ENCODE measurements at regions of chr19 and their contacts with region 1.

Region 1: DNA sequence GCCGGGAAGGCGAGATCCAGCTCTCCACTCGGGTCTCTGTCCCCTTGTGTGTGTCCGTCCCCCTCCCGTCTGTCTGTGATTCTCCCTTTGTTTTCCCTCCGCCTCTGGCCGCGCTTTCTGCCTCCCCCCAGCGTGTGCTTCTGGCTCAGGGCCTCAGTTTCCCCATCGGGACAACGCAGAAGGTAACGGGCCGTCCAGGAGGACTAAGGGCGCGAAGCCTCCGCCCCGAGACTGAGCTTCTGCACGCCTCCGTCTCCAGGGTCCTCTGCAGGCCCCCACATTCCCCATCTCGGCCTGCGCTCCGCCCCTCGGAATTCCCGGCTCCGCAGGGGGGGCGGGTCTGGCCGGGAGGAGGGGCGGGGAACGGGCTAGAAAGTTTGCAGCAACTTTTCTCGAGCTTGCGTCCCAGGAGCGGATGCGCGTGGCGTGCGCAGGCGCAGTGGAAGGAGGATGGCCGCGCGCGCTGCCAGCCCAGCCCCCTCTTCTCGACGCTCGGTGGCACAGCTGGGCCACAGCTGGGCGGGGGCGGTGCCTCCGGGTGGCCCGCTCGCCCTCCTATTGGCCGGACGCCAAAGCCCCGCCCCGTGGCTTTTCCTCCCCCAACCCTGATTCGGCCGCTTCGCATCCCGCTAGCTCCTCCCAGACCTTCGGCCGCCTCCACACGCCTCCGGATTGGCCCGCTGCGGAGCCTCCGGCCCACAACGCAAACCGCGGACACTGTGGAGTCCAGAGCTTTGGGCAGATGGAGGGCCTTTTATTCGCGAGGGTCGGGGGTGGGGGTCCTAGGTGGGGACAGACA is at the start of gene SIX5:
- DNase-seq: peak; percentile 98
- H3K4me3 ChIP-seq: peak within 1 kb of the TSS; percentile 30 to 93 (median 59)
- H3K27ac ChIP-seq: peak within 1 kb of the TSS; percentile 91 to 96 (median 95)
- H3K4me1 ChIP-seq: peaks cover 26 to 36% of the 10 kb centered on the region in 2 donors
- H3K27me3 ChIP-seq: no peaks in the 10 kb centered on the region
- CTCF ChIP-seq: no peak
- POLR2A ChIP-seq: peak; percentile 92 to 94
- total RNA-seq, gene SIX5: 18.3 to 33.0 (median 23.3) TPM

Region 2: DNA sequence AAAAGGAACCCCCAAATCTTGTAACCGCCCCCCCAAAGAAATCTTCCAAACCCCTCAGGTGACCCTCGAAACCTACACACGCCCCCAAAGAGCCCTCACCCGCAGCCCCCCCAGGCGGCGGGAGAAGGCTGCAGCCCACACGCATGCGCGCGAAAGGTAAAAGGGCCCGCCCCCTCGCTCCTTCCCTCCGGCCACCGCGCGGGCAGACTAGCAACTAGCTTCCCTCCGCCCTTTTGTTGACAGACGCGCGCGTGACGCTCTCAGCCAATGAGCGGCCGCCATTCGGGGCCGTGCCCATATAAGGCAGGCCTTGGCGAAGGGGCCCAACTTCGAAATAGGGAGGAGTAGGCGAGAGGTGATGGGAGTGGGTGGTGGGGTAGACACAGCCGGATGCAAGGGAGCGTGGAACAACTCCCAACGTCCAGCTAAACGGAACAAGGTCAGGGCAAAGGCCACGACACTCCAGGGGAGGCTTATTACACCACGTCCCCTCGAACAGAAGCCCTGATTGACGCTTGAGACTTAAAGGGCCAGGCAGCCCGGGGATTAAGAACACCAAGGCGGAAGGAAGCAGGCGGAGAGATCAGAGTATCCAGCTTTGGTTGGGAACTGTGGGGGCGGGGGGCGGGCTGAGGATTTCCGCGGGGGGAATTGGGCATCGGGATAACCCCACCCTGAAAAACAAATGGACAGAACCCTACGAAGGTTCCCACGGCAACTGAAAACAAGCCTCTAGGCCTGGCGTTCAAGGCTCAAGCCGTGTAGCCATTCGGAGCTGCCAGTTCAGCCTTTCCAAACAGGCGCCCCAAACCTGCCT is 51.8 kb before region 1 on chr19:
- intact Hi-C with region 1: loop called (anchors 10 kb)
- DNase-seq: peak; percentile 99
- H3K4me3 ChIP-seq: peak overlapping the region in 2 of 3 donors; percentile 50 to 84
- H3K27ac ChIP-seq: peak overlapping the region; percentile 91 to 98 (median 95)
- H3K4me1 ChIP-seq: peaks cover 17 to 21% of the 10 kb centered on the region in 2 donors
- H3K27me3 ChIP-seq: no peaks in the 10 kb centered on the region
- CTCF ChIP-seq: peak in 2 of 6 experiments; percentile 4 to 21
- POLR2A ChIP-seq: peak in 1 of 2 donors; percentile 89

Region 3: GRCh38 chr19:45913874-45914830 is 145.0 kb after region 1 on chr19 and contains the start of gene NANOS2:
- intact Hi-C with region 1: no loop called
- DNase-seq: no peak
- H3K4me3 ChIP-seq: no peak within 1 kb of the TSS
- H3K27ac ChIP-seq: no peak within 1 kb of the TSS
- H3K4me1 ChIP-seq: no peaks in the 10 kb centered on the region
- H3K27me3 ChIP-seq: no peaks in the 10 kb centered on the region
- CTCF ChIP-seq: no peak
- POLR2A ChIP-seq: no peak
- total RNA-seq, gene NANOS2: not detected